Ovary (tissue), 10 donors: ENCODE measurements at regions of chr16 and their contacts with region 1.

Region 1: GRCh38 chr16:3745751-3746355 is 28.5 kb upstream of the TRAP1 start:
- DNase-seq: peak in 3 of 5 donors; percentile 42 to 50 (median 44)
- H3K4me3 ChIP-seq: no peak overlapping the region
- H3K27ac ChIP-seq: peak overlapping the region in 1 of 2 donors; percentile 35
- H3K4me1 ChIP-seq: peaks cover 9% of the 10 kb centered on the region
- H3K27me3 ChIP-seq: no peaks in the 10 kb centered on the region
- CTCF ChIP-seq: no peak
- EP300 ChIP-seq: no peak
- POLR2A ChIP-seq: no peak

Region 2: DNA sequence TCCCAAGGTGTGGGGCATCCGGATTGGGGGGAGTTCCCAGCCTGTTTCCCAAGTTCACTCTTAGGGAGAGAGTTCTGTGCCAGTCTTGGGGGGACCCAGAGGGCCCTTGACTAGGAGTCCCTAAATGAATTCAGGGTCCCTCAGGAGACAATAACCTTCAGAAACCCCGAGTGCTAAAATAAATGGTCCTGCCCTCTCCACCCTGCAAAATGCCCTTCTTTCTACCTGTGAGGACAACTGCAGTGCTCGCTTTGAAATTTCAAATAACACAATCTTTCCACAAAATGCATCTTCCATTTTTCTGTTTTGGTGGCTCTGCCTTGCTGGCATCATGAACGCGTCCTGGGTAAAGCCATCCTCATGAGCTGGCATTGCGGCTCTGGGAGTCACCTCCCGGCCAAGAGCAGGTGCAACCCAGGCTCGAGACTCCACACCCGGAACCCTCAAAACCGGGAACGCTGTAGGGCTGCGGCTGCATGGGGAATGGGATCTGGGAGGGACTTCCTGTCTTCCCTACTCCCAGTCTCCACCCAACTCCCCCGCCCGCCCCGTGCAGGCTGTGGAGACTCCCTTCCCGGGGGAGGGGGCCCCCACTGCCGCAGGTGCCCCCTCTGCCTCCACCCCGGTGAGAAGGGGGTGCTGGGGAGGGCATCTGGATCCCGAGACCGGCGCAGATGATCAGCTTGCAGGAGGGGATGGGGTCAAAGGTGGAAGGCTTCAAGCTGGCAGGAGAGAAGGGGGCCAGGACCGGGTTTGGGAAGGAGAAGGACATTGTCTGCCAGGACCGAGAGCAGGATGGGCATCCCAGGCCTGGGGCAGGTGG is 633.6 kb before region 1 on chr16 and contains the start of gene ZNF205:
- intact Hi-C with region 1: no loop called
- DNase-seq: peak; percentile 77 to 85 (median 83)
- H3K4me3 ChIP-seq: peak within 1 kb of the TSS; percentile 66
- H3K27ac ChIP-seq: peak within 1 kb of the TSS in 1 of 2 donors; percentile 43
- H3K4me1 ChIP-seq: peaks cover 10% of the 10 kb centered on the region
- H3K27me3 ChIP-seq: no peaks in the 10 kb centered on the region
- CTCF ChIP-seq: no peak
- EP300 ChIP-seq: no peak
- POLR2A ChIP-seq: no peak
- total RNA-seq, gene ZNF205: 10.7 to 16.3 (median 15.6) TPM

Region 3: GRCh38 chr16:3690470-3690928 is 55.4 kb before region 1 on chr16:
- intact Hi-C with region 1: loop called in 1 of 4 experiments (anchors 2 kb)
- DNase-seq: peak; percentile 91 to 95 (median 94)
- H3K4me3 ChIP-seq: peak overlapping the region; percentile 16
- H3K27ac ChIP-seq: no peak overlapping the region
- H3K4me1 ChIP-seq: peaks cover 5% of the 10 kb centered on the region
- H3K27me3 ChIP-seq: no peaks in the 10 kb centered on the region
- CTCF ChIP-seq: peak; percentile 90 to 94 (median 93)
- EP300 ChIP-seq: no peak
- POLR2A ChIP-seq: no peak